Activated CD8-positive, alpha-beta T cell treated with anti-CD3 and anti-CD28 coated beads, Interleukin-2, amount 10 ng/mL, durations not matched to agents 7 days and 5 days (primary cell): ENCODE measurements at regions of chr2 and their contacts with region 1.

Region 1: DNA sequence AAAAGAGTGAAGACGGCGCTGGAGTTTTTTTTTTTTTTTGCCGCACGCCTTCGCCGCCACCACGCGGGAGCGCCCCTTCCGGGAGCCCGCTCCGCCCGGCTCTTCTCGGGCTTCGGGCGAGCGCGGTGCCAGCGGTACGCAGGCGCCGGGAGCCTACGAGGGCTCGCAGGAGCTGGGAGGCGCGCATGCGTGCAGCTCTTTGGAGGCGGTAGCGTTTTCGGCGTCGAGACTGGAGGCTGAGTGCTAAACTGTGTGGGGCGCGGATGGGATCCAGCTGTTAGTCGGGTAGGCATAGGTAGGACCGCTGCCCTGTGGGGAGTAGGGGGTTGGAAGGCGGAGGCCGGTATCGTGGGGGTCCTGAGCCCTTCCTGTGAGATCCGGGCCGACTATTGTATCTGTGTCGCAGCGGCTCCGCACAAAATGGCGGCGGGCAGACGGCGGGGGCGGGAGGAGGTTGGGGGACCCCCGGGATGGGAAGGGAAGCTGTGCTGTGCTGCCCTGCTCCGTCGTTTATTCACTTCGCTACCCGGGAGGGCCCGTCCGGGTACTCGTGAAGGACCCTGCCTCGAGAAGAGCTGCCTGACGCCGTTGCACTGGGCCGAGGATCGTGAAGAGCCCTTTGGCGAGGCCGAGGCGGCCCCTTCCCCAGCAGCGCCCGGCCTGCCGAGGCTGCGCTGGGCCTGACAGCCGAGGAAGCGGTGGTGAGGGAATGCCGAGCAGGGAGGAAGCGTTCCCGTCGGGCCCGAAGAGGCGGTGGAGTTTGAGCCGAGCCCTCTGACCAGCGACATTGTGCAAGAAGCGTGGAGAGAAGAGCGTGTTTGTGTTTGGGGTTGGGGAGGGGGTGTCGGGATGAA is at the start of gene ZNF638:
- DNase-seq: peak; percentile 93
- ATAC-seq: peak; percentile 99
- H3K4me3 Mint-ChIP-seq: peak within 1 kb of the TSS; percentile 96
- H3K27ac Mint-ChIP-seq: peak within 1 kb of the TSS; percentile 100
- H3K4me1 Mint-ChIP-seq: peaks cover 25% of the 10 kb centered on the region
- H3K27me3 Mint-ChIP-seq: peaks cover 5% of the 10 kb centered on the region
- total RNA-seq, gene ZNF638: 69.7 to 74.0 TPM

Region 2: GRCh38 chr2:71006955-71007799 is 324.6 kb before region 1 on chr2:
- CTCF ChIA-PET with region 1: no interaction called
- POLR2A ChIA-PET with region 1: no interaction called
- DNase-seq: no peak
- ATAC-seq: no peak
- H3K4me3 Mint-ChIP-seq: no peak overlapping the region
- H3K27ac Mint-ChIP-seq: no peak overlapping the region
- H3K4me1 Mint-ChIP-seq: no peaks in the 10 kb centered on the region
- H3K27me3 Mint-ChIP-seq: peaks cover 13% of the 10 kb centered on the region

Region 3: DNA sequence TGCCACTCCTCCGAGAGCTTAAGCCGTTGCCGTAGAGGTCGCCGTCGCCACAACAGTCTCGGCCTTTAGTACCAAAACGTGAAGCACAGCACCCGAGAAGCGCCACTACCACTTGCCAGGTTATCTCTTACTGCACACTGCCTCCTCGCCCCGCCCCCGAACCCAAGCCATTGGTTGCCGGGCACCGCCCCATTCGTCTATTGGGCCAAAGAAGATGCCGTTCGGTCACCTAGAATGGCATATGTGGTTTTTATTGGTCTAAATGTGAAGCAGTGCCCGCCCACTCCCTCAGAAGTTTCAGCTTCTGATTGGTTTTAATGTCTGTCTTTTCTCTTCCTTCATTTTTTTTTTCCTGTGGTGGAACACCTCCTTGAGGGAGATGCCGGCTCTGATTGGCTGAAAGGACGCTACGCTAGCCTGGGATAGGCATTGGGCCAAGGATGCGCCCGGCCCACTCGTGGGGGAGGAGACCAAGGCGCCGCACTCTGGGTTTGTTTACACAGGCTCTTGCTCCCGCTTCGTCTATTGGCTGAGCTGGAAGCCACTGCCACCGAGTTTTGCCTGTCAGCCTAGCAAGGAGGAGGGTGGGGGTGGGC is 104.7 kb before region 1 on chr2 and contains the start of gene PAIP2B:
- CTCF ChIA-PET with region 1: interaction called, 5 read pairs
- POLR2A ChIA-PET with region 1: interaction called, 11 read pairs
- DNase-seq: peak; percentile 99
- ATAC-seq: peak; percentile 98
- H3K4me3 Mint-ChIP-seq: peak within 1 kb of the TSS; percentile 97
- H3K27ac Mint-ChIP-seq: peak within 1 kb of the TSS; percentile 88
- H3K4me1 Mint-ChIP-seq: peaks cover 17% of the 10 kb centered on the region
- H3K27me3 Mint-ChIP-seq: peaks cover 14% of the 10 kb centered on the region
- total RNA-seq, gene PAIP2B: 1.3 to 1.5 TPM

Region 4: DNA sequence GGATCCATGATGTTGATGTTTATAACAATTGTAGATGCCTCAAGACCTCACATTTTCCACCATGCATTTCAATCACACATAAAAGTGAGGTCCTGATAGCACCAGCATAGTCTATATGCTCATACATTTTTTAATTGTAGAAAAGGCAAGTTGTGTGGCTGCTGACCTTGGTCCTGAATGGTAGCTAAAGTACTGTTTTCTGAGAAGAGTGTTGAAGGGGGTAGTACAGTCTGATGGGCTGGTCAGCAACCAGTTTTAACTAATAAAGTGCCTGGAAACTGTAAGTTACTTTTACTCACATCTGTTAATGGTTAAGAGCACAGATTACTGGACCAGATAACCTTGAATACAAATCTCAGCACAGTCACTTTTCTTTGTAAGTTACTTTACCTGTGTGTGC is 15.7 kb after region 1 on chr2:
- CTCF ChIA-PET with region 1: interaction called, 18 read pairs
- POLR2A ChIA-PET with region 1: interaction called, 4 read pairs
- DNase-seq: peak; percentile 37
- ATAC-seq: no peak
- H3K4me3 Mint-ChIP-seq: no peak overlapping the region
- H3K27ac Mint-ChIP-seq: no peak overlapping the region
- H3K4me1 Mint-ChIP-seq: peaks cover 3% of the 10 kb centered on the region
- H3K27me3 Mint-ChIP-seq: no peaks in the 10 kb centered on the region